Left ventricle myocardium superior (tissue), 1 donor: ENCODE measurements at regions of chr6 and their contacts with region 1.

Region 1: GRCh38 chr6:115896538-115897129 is 164.1 kb downstream of the FRK start:
- DNase-seq: no peak
- ATAC-seq: no peak

Region 2: DNA sequence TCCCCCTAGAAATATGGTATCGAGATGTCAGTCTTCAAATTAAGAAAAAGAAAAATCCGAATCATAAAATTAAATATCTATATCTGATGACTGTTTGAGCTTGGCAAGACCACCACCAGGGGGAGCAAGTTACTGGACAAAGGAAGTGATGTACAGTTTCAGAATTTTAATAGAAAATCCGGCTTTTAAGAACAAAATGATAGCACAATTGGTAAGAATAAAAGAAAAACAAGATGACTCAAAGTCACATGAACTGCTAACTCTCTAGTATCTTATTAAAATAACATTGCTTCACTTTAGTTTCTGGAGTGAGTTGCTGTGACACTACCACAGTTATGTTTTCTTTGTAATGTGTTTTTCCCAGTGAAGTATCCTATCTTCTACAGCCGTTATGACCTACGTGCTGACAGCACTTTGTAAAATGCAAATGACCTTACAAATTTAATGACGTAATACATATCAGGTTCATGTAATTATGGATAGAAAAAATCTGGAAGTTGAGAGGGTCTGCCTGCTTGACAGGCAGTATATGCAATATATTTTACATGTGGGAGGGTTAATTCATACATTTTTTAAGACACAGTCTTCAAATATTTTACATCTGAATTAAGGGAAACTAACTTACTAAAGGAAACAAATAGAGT is 1148.5 kb before region 1 on chr6:
- intact Hi-C with region 1: loop called (anchors 5 kb)
- DNase-seq: peak; percentile 24
- ATAC-seq: no peak

Region 3: GRCh38 chr6:115677198-115677597 is 219.4 kb before region 1 on chr6:
- intact Hi-C with region 1: no loop called
- DNase-seq: no peak
- ATAC-seq: no peak

Region 4: GRCh38 chr6:116190550-116190949 is 293.9 kb after region 1 on chr6:
- intact Hi-C with region 1: no loop called
- DNase-seq: no peak
- ATAC-seq: no peak